Aorta (tissue), 5 donors: ENCODE measurements at regions of chr3 and their contacts with region 1.

Region 1: DNA sequence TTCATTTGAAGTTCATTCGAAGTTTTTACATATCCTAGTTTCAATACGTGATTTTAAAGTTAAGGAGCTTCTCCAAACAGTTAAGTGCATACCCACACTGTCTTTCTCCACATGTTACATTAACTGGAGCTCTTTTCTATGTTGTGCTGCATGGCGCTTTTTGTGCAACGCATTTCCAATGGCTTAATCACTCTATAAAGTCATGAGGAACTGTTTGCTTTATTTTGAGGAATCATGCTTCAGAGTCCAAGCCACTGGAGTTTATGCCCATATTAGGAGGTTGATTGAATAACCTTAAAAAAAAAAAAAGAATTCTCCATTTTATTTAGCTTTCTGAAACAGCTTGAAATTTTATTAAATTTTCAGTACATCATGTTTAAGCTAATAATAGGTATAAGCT is 109.4 kb upstream of the MBNL1 start:
- DNase-seq: peak in 1 of 2 donors; percentile 44
- ATAC-seq: peak; percentile 79
- H3K4me3 ChIP-seq: no peak overlapping the region
- H3K27ac ChIP-seq: no peak overlapping the region
- H3K4me1 ChIP-seq: peaks cover 2% of the 10 kb centered on the region in 2 donors
- H3K27me3 ChIP-seq: no peaks in the 10 kb centered on the region

Region 2: DNA sequence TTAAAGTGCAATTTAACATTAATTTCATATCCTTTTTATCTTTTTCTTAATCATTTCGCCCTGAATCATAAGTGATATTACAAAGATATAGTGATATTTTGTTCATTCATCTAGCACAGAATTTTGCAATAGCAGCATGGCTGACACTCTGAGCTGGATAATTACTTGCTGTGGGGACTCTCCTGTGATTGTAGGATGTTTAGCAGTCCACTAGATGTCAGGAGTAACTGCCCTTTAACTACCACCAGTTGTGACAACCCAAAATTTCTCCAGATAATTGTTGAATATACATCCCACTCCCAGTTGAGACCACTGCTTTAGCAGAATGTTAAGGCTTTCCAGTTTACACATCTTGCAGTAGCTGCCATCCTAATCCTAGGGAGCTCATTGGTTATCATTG is 87.4 kb before region 1 on chr3:
- intact Hi-C with region 1: loop called in 1 of 2 experiments (anchors 5 kb)
- DNase-seq: no peak
- ATAC-seq: peak; percentile 80
- H3K4me3 ChIP-seq: no peak overlapping the region
- H3K27ac ChIP-seq: no peak overlapping the region
- H3K4me1 ChIP-seq: no peaks in the 10 kb centered on the region
- H3K27me3 ChIP-seq: no peaks in the 10 kb centered on the region

Region 3: GRCh38 chr3:152084441-152085158 is 74.7 kb before region 1 on chr3:
- intact Hi-C with region 1: loop called in 1 of 2 experiments (anchors 5 kb)
- DNase-seq: no peak
- ATAC-seq: no peak
- H3K4me3 ChIP-seq: no peak overlapping the region
- H3K27ac ChIP-seq: no peak overlapping the region
- H3K4me1 ChIP-seq: peaks cover 0 to 3% of the 10 kb centered on the region in 2 donors
- H3K27me3 ChIP-seq: no peaks in the 10 kb centered on the region

Region 4: DNA sequence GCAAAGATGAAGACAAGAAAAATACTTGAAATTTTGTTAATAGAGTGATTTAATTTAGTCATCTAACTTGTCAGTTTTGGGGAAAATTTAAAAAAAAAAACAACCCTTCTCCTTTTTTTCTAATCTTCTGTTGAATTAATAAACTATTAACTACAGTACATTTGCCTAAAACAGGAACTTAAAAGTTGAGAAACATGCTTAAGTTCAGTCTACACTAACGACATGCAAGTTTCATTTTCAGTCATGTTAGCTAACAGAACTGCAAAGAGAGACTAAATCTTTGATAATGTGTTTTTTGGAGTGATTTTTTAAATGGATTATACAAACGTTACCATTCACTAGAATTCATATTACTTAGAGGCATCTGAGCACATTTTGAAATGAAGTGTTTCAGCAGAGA is 37.5 kb after region 1 on chr3:
- intact Hi-C with region 1: loop called (anchors 5 kb)
- DNase-seq: no peak
- ATAC-seq: no peak
- H3K4me3 ChIP-seq: no peak overlapping the region
- H3K27ac ChIP-seq: peak overlapping the region in 1 of 2 donors; percentile 28
- H3K4me1 ChIP-seq: peaks cover 2 to 3% of the 10 kb centered on the region in 2 donors
- H3K27me3 ChIP-seq: no peaks in the 10 kb centered on the region

Region 5: GRCh38 chr3:152205097-152205593 is 45.8 kb after region 1 on chr3:
- intact Hi-C with region 1: loop called in 1 of 2 experiments (anchors 5 kb)
- DNase-seq: no peak
- ATAC-seq: peak; percentile 25
- H3K4me3 ChIP-seq: peak overlapping the region; percentile 80 to 93
- H3K27ac ChIP-seq: peak overlapping the region; percentile 96 to 99
- H3K4me1 ChIP-seq: peaks cover 4 to 6% of the 10 kb centered on the region in 2 donors
- H3K27me3 ChIP-seq: no peaks in the 10 kb centered on the region

Region 6: GRCh38 chr3:152258448-152259393 is 99.4 kb after region 1 on chr3:
- intact Hi-C with region 1: loop called in 1 of 2 experiments (anchors 5 kb)
- DNase-seq: peak; percentile 77 to 84
- ATAC-seq: peak; percentile 90
- H3K4me3 ChIP-seq: peak overlapping the region in 1 of 2 donors; percentile 24
- H3K27ac ChIP-seq: peak overlapping the region; percentile 42 to 72
- H3K4me1 ChIP-seq: peaks cover 1 to 3% of the 10 kb centered on the region in 2 donors
- H3K27me3 ChIP-seq: no peaks in the 10 kb centered on the region

Region 7: GRCh38 chr3:152350139-152350538 is 190.8 kb after region 1 on chr3:
- intact Hi-C with region 1: no loop called
- DNase-seq: no peak
- ATAC-seq: no peak
- H3K4me3 ChIP-seq: no peak overlapping the region
- H3K27ac ChIP-seq: no peak overlapping the region
- H3K4me1 ChIP-seq: peaks cover 4 to 14% of the 10 kb centered on the region in 2 donors
- H3K27me3 ChIP-seq: no peaks in the 10 kb centered on the region